CD4-positive, alpha-beta T cell (primary cell): ENCODE measurements at regions of chr15 and their contacts with region 1.

Region 1: DNA sequence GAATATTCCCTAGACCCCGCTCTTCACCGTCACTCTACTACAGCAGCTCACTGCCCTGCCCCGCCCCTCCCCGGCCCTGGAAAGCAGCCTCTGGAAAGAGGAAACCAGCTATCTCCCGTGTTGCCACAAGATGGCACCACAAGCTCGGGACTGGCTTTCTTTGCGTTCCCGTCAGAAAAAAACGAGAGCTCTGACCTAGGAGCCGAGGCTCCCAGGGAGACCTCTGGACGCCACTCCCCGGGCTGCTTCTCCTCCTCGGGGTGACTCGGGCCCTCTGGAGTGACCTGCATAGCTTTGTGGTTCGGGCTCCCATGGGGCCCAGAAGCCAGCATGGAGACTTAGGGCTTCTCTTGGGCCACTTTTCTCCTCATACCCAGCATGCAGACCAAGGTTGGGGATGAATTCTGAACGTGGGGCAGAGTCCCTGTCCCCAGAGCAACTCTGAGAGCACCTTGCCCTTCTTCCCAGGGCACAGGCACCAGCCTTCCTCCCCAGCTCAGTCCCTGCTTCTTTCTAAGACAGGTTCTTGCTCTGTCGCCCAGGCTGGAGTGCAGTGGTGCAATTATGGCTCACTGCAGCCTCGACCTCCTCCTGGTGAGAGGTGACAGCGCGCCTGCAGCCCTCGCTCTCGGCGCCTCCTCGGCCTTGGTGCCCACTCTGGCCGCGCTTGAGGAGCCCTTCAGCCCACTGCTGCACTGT is 19.0 kb downstream of the STOML1 start:
- DNase-seq: peak; percentile 64 to 89 (median 71)
- ATAC-seq: peak; percentile 87
- H3K4me3 ChIP-seq: peak overlapping the region; percentile 7
- H3K4me3 Mint-ChIP-seq: no peak overlapping the region
- H3K27ac ChIP-seq: no peak overlapping the region
- H3K27ac Mint-ChIP-seq: no peak overlapping the region
- H3K4me1 ChIP-seq: peaks cover 26% of the 10 kb centered on the region
- H3K4me1 Mint-ChIP-seq: peaks cover 37% of the 10 kb centered on the region
- H3K27me3 ChIP-seq: peaks cover 3 to 6% of the 10 kb centered on the region in 2 experiments
- H3K27me3 Mint-ChIP-seq: peaks cover 23% of the 10 kb centered on the region
- CTCF ChIP-seq: peak; percentile 80

Region 2: GRCh38 chr15:74025436-74025835 is 52.3 kb after region 1 on chr15:
- CTCF ChIA-PET with region 1: no interaction called
- POLR2A ChIA-PET with region 1: no interaction called
- intact Hi-C with region 1: no loop called
- DNase-seq: no peak
- ATAC-seq: no peak
- H3K4me3 ChIP-seq: no peak overlapping the region
- H3K4me3 Mint-ChIP-seq: no peak overlapping the region
- H3K27ac ChIP-seq: no peak overlapping the region
- H3K27ac Mint-ChIP-seq: no peak overlapping the region
- H3K4me1 ChIP-seq: no peaks in the 10 kb centered on the region
- H3K4me1 Mint-ChIP-seq: no peaks in the 10 kb centered on the region
- H3K27me3 ChIP-seq: no peaks in the 10 kb centered on the region
- H3K27me3 Mint-ChIP-seq: no peaks in the 10 kb centered on the region
- CTCF ChIP-seq: no peak

Region 3: GRCh38 chr15:74036271-74037170 is 63.4 kb after region 1 on chr15:
- CTCF ChIA-PET with region 1: interaction called, 3 read pairs
- POLR2A ChIA-PET with region 1: no interaction called
- intact Hi-C with region 1: loop called in 1 of 2 experiments (anchors 1 kb)
- DNase-seq: no peak
- ATAC-seq: no peak
- H3K4me3 ChIP-seq: no peak overlapping the region
- H3K4me3 Mint-ChIP-seq: no peak overlapping the region
- H3K27ac ChIP-seq: no peak overlapping the region
- H3K27ac Mint-ChIP-seq: no peak overlapping the region
- H3K4me1 ChIP-seq: no peaks in the 10 kb centered on the region
- H3K4me1 Mint-ChIP-seq: no peaks in the 10 kb centered on the region
- H3K27me3 ChIP-seq: no peaks in the 10 kb centered on the region
- H3K27me3 Mint-ChIP-seq: no peaks in the 10 kb centered on the region
- CTCF ChIP-seq: no peak

Region 4: GRCh38 chr15:74053941-74054529 is 80.9 kb after region 1 on chr15:
- CTCF ChIA-PET with region 1: interaction called, 11 read pairs
- POLR2A ChIA-PET with region 1: interaction called, 4 read pairs
- intact Hi-C with region 1: loop called in 1 of 2 experiments (anchors 10 kb)
- DNase-seq: peak; percentile 47 to 84 (median 61)
- ATAC-seq: peak; percentile 100
- H3K4me3 ChIP-seq: no peak overlapping the region
- H3K4me3 Mint-ChIP-seq: no peak overlapping the region
- H3K27ac ChIP-seq: no peak overlapping the region
- H3K27ac Mint-ChIP-seq: no peak overlapping the region
- H3K4me1 ChIP-seq: peaks cover 4% of the 10 kb centered on the region
- H3K4me1 Mint-ChIP-seq: peaks cover 18% of the 10 kb centered on the region
- H3K27me3 ChIP-seq: no peaks in the 10 kb centered on the region
- H3K27me3 Mint-ChIP-seq: no peaks in the 10 kb centered on the region
- CTCF ChIP-seq: peak; percentile 38

Region 5: GRCh38 chr15:74127260-74127953 is 154.3 kb after region 1 on chr15:
- CTCF ChIA-PET with region 1: no interaction called
- POLR2A ChIA-PET with region 1: no interaction called
- intact Hi-C with region 1: loop called in 1 of 2 experiments (anchors 5 kb)
- DNase-seq: peak; percentile 67 to 88 (median 78)
- ATAC-seq: peak; percentile 92
- H3K4me3 ChIP-seq: peak overlapping the region; percentile 7
- H3K4me3 Mint-ChIP-seq: peak overlapping the region; percentile 48
- H3K27ac ChIP-seq: no peak overlapping the region
- H3K27ac Mint-ChIP-seq: no peak overlapping the region
- H3K4me1 ChIP-seq: peaks cover 26% of the 10 kb centered on the region
- H3K4me1 Mint-ChIP-seq: peaks cover 25% of the 10 kb centered on the region
- H3K27me3 ChIP-seq: peaks cover 59 to 64% of the 10 kb centered on the region in 2 experiments
- H3K27me3 Mint-ChIP-seq: peaks cover 95% of the 10 kb centered on the region
- CTCF ChIP-seq: peak; percentile 96

Region 6: GRCh38 chr15:74302821-74303359 is 329.8 kb after region 1 on chr15:
- CTCF ChIA-PET with region 1: no interaction called
- POLR2A ChIA-PET with region 1: no interaction called
- intact Hi-C with region 1: loop called (anchors 2 to 5 kb)
- DNase-seq: peak in 10 of 14 experiments; percentile 7 to 44 (median 20)
- ATAC-seq: no peak
- H3K4me3 ChIP-seq: no peak overlapping the region
- H3K4me3 Mint-ChIP-seq: no peak overlapping the region
- H3K27ac ChIP-seq: no peak overlapping the region
- H3K27ac Mint-ChIP-seq: no peak overlapping the region
- H3K4me1 ChIP-seq: no peaks in the 10 kb centered on the region
- H3K4me1 Mint-ChIP-seq: no peaks in the 10 kb centered on the region
- H3K27me3 ChIP-seq: peaks cover 18 to 21% of the 10 kb centered on the region in 2 experiments
- H3K27me3 Mint-ChIP-seq: peaks cover 76% of the 10 kb centered on the region
- CTCF ChIP-seq: peak; percentile 31

Region 7: GRCh38 chr15:74322181-74323076 is 349.3 kb after region 1 on chr15:
- CTCF ChIA-PET with region 1: interaction called, 4 read pairs
- POLR2A ChIA-PET with region 1: interaction called, 6 read pairs
- intact Hi-C with region 1: loop called (anchors 1 to 5 kb)
- DNase-seq: peak; percentile 33 to 73 (median 48)
- ATAC-seq: peak; percentile 81
- H3K4me3 ChIP-seq: no peak overlapping the region
- H3K4me3 Mint-ChIP-seq: no peak overlapping the region
- H3K27ac ChIP-seq: no peak overlapping the region
- H3K27ac Mint-ChIP-seq: no peak overlapping the region
- H3K4me1 ChIP-seq: peaks cover 4% of the 10 kb centered on the region
- H3K4me1 Mint-ChIP-seq: peaks cover 16% of the 10 kb centered on the region
- H3K27me3 ChIP-seq: no peaks in the 10 kb centered on the region
- H3K27me3 Mint-ChIP-seq: no peaks in the 10 kb centered on the region
- CTCF ChIP-seq: peak; percentile 64